Activated CD4-positive, alpha-beta memory T cell treated with anti-CD3 and anti-CD28 coated beads for 36 hours (primary cell): ENCODE measurements at regions of chr12 and their contacts with region 1.

Region 1: DNA sequence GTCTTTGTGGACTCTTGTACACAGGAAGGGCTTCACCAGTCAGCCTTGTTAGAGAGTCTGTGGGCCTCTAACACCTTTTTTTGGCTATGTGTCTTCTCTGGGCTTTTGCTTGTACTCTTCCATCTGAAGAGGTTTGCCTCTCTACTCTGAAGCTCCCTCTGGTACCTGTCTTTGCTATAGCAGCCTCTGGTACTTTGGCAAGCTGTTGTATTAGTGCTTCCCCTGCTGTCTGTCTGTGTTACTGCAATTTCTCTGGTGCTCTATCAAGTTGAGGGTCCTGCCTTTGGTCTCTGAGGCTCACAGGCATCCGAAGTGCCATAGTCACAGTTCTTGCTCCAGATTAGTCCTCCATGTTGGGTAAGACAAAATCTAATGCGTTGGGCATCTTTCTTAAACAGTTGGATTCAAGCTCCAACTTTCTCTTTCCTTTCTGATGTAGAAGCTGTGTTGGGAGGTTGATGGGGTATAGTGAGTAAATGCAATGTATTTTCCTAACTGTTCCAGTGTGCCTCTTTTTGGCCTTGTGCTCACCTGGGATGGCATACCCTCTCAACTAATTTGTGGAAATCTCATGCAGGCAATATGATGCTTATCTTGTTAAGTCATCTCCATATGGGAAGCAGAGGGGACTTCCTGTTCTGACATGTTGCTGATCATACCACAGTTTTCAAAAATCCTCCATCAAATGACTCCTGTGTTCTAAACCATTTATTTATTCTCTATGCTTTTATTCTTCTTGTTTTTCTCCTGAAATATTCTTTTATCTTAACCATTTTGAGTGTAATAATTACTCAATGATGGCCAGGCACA is 88.8 kb downstream of the ATF7IP start:
- DNase-seq: peak; percentile 31
- H3K4me3 Mint-ChIP-seq: peak overlapping the region; percentile 20
- H3K27ac Mint-ChIP-seq: peak overlapping the region; percentile 77
- H3K4me1 Mint-ChIP-seq: peaks cover 56% of the 10 kb centered on the region
- H3K27me3 Mint-ChIP-seq: no peaks in the 10 kb centered on the region

Region 2: GRCh38 chr12:14394317-14395073 is 59.8 kb before region 1 on chr12:
- CTCF ChIA-PET with region 1: interaction called, 9 read pairs
- POLR2A ChIA-PET with region 1: no interaction called
- intact Hi-C with region 1: loop called (anchors 2 kb)
- DNase-seq: peak; percentile 53
- H3K4me3 Mint-ChIP-seq: peak overlapping the region; percentile 74
- H3K27ac Mint-ChIP-seq: peak overlapping the region; percentile 93
- H3K4me1 Mint-ChIP-seq: peaks cover 79% of the 10 kb centered on the region
- H3K27me3 Mint-ChIP-seq: no peaks in the 10 kb centered on the region

Region 3: GRCh38 chr12:14417715-14418114 is 36.6 kb before region 1 on chr12:
- CTCF ChIA-PET with region 1: interaction called, 9 read pairs
- POLR2A ChIA-PET with region 1: no interaction called
- intact Hi-C with region 1: loop called (anchors 1 kb)
- DNase-seq: peak; percentile 85
- H3K4me3 Mint-ChIP-seq: peak overlapping the region; percentile 69
- H3K27ac Mint-ChIP-seq: peak overlapping the region; percentile 94
- H3K4me1 Mint-ChIP-seq: peaks cover 63% of the 10 kb centered on the region
- H3K27me3 Mint-ChIP-seq: no peaks in the 10 kb centered on the region

Region 4: DNA sequence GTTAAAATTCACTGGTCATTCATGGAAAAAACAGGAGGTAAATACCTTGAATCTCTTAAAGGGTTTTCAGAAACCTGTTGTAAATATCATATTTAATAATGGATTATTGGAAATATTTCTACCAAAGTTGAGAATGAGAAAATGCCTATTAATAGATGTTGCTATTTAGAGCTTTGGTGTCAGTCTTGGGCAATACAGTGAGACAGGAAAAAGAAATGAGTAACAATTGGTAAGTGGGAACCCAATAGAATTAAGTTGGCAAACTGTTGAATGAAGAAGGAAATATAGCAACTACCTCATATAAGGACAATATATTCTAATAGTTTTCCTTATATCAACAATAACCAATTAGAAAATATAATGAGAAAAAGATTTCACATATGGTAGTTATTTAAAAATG is 10.8 kb before region 1 on chr12:
- CTCF ChIA-PET with region 1: interaction called, 11 read pairs
- POLR2A ChIA-PET with region 1: no interaction called
- intact Hi-C with region 1: no loop called
- DNase-seq: no peak
- H3K4me3 Mint-ChIP-seq: no peak overlapping the region
- H3K27ac Mint-ChIP-seq: peak overlapping the region; percentile 23
- H3K4me1 Mint-ChIP-seq: peaks cover 28% of the 10 kb centered on the region
- H3K27me3 Mint-ChIP-seq: no peaks in the 10 kb centered on the region

Region 5: GRCh38 chr12:14479004-14479403 is 24.7 kb after region 1 on chr12:
- CTCF ChIA-PET with region 1: no interaction called
- POLR2A ChIA-PET with region 1: interaction called, 3 read pairs
- intact Hi-C with region 1: loop called (anchors 2 kb)
- DNase-seq: no peak
- H3K4me3 Mint-ChIP-seq: no peak overlapping the region
- H3K27ac Mint-ChIP-seq: peak overlapping the region; percentile 67
- H3K4me1 Mint-ChIP-seq: peaks cover 22% of the 10 kb centered on the region
- H3K27me3 Mint-ChIP-seq: no peaks in the 10 kb centered on the region

Region 6: DNA sequence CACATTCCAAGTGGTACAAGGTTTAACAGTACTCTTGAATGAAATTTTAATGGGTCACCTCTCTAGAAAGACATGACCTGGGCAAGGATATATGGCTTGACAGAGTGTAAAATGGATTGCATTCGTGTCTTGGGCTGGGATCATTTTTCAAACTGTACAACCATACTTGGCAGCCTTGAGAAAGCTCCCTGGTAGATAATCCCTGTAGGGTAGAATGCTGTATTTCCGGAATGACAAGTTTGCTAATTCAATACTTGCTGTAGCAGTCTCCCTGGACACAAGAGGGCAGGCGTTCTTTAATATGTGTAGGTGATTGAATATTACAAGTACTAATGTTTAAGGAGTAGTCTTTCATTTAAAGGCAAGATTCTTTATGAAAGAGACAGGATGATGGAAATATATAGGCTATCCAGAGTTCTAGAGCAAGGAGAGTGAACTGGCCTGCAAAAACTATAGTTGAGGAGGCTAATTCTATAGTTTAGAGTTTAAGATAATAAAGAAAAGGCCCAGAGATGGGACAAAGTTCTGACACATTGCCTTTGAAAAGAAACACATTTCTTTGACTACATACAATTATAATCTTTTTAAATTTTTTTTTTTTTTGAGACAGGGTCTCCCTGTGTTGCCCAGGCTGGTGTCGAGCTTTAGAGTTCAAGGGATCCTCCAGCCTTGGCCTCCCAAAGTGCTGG is 60.0 kb after region 1 on chr12:
- CTCF ChIA-PET with region 1: no interaction called
- POLR2A ChIA-PET with region 1: no interaction called
- intact Hi-C with region 1: no loop called
- DNase-seq: no peak
- H3K4me3 Mint-ChIP-seq: no peak overlapping the region
- H3K27ac Mint-ChIP-seq: no peak overlapping the region
- H3K4me1 Mint-ChIP-seq: no peaks in the 10 kb centered on the region
- H3K27me3 Mint-ChIP-seq: peaks cover 5% of the 10 kb centered on the region

Region 7: GRCh38 chr12:14629832-14630710 is 175.8 kb after region 1 on chr12:
- CTCF ChIA-PET with region 1: no interaction called
- POLR2A ChIA-PET with region 1: no interaction called
- intact Hi-C with region 1: no loop called
- DNase-seq: peak; percentile 71
- H3K4me3 Mint-ChIP-seq: no peak overlapping the region
- H3K27ac Mint-ChIP-seq: no peak overlapping the region
- H3K4me1 Mint-ChIP-seq: no peaks in the 10 kb centered on the region
- H3K27me3 Mint-ChIP-seq: no peaks in the 10 kb centered on the region